Activated naive CD4-positive, alpha-beta T cell treated with anti-CD3 and anti-CD28 coated beads for 36 hours (primary cell): ENCODE measurements at regions of chr19 and their contacts with region 1.

Region 1: GRCh38 chr19:37594304-37594981 is at the starts of genes ZNF540 and ZNF571:
- DNase-seq: peak; percentile 96
- H3K4me3 Mint-ChIP-seq: peak within 1 kb of the TSS; percentile 99
- H3K27ac Mint-ChIP-seq: peak within 1 kb of the TSS; percentile 97
- H3K4me1 Mint-ChIP-seq: peaks cover 17% of the 10 kb centered on the region
- H3K27me3 Mint-ChIP-seq: no peaks in the 10 kb centered on the region
- total RNA-seq, gene ZNF540: 1.0 to 1.9 TPM
- total RNA-seq, gene ZNF571: 2.8 to 3.5 TPM

Region 2: DNA sequence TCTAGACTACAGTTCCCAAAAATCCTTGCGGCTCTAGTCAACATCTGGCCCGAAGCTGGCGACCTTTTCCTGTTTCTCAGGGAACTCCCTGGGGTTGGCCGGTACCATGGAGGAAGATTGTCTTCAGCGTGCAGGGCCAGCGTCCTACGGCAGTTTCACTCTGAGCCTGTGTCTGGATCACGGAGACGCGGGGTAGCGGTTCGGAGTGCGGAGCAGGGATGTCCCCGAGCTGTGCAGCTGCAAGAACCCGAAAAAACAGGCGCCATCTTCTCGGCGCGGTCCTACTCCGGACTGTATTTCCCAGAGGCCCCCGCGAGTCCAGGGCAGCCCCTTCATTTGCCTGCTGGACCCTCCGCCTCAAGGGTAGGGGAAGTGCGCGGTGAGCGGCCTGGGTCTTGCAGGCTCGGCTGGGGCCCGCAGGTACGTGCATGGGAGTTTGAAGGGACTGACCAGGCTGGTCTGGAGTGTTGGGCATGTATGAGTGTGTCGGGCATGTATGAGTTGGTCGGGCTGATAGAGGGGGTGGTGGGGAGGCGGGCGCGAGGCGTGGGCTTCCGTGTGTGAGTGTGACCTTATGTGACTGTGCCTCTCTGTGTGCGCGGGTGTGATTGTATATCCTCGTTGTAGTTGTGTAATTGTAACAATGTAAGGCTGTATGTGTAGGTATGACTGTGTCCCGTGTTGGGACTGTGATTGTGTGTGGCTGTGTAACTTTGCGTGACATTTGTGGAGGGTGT is 376.4 kb before region 1 on chr19 and contains the start of gene ZNF383:
- CTCF ChIA-PET with region 1: no interaction called
- intact Hi-C with region 1: loop called (anchors 1 kb)
- DNase-seq: peak; percentile 87
- H3K4me3 Mint-ChIP-seq: peak within 1 kb of the TSS; percentile 88
- H3K27ac Mint-ChIP-seq: peak within 1 kb of the TSS; percentile 92
- H3K4me1 Mint-ChIP-seq: peaks cover 16% of the 10 kb centered on the region
- H3K27me3 Mint-ChIP-seq: no peaks in the 10 kb centered on the region
- total RNA-seq, gene ZNF383: 8.4 to 9.1 TPM

Region 3: DNA sequence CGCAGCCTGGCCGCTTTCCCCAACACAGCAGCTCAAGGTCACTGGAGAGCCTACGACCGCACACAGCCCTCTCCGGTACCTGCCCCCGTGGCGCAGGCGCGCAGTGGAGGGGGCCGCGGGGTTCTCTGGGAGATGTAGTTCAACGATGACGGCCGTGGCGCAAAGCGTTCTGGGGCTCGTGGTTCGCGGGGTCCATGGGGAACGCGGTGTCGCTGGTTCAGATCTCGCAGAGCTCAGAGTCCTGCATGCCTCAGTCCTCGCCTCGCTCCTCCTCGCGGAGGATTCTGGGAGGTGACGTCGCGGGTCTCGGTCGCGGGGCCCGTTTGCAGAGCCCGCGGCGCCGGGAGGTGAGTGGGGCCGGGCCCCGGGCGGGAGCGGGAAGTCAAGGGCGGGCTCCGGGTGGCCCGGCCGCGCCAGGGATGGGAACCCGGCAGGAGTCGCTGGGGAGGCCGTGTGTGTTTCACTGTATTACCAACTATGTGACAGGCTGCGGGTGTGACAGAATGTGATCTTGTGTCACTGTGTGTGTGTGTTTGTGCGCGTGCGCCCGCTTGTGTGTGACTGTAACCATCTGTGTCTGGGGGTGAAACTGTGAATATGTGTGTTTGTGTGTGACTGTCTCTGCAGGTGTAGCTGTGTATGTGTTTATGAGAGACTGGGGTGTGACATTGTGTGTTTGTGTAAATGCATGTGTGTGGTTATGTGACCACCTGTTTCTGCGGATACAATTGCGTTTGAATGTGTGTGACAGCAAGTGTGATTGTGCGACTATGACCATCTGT is 223.4 kb before region 1 on chr19 and contains the start of gene ZNF527:
- CTCF ChIA-PET with region 1: no interaction called
- intact Hi-C with region 1: loop called (anchors 1 kb)
- DNase-seq: peak; percentile 97
- H3K4me3 Mint-ChIP-seq: peak within 1 kb of the TSS; percentile 83
- H3K27ac Mint-ChIP-seq: peak within 1 kb of the TSS; percentile 83
- H3K4me1 Mint-ChIP-seq: peaks cover 11% of the 10 kb centered on the region
- H3K27me3 Mint-ChIP-seq: no peaks in the 10 kb centered on the region
- total RNA-seq, gene ZNF527: 4.3 to 5.0 TPM

Region 4: GRCh38 chr19:37572203-37572602 is 22.2 kb before region 1 on chr19:
- CTCF ChIA-PET with region 1: no interaction called
- intact Hi-C with region 1: no loop called
- DNase-seq: no peak
- H3K4me3 Mint-ChIP-seq: no peak overlapping the region
- H3K27ac Mint-ChIP-seq: no peak overlapping the region
- H3K4me1 Mint-ChIP-seq: no peaks in the 10 kb centered on the region
- H3K27me3 Mint-ChIP-seq: no peaks in the 10 kb centered on the region

Region 5: GRCh38 chr19:37655689-37656371 is 61.4 kb after region 1 on chr19:
- CTCF ChIA-PET with region 1: no interaction called
- intact Hi-C with region 1: loop called (anchors 1 kb)
- DNase-seq: peak; percentile 87
- H3K4me3 Mint-ChIP-seq: peak overlapping the region; percentile 93
- H3K27ac Mint-ChIP-seq: peak overlapping the region; percentile 93
- H3K4me1 Mint-ChIP-seq: peaks cover 29% of the 10 kb centered on the region
- H3K27me3 Mint-ChIP-seq: no peaks in the 10 kb centered on the region

Region 6: GRCh38 chr19:37706052-37706605 is 111.7 kb after region 1 on chr19:
- CTCF ChIA-PET with region 1: no interaction called
- intact Hi-C with region 1: no loop called
- DNase-seq: no peak
- H3K4me3 Mint-ChIP-seq: no peak overlapping the region
- H3K27ac Mint-ChIP-seq: no peak overlapping the region
- H3K4me1 Mint-ChIP-seq: no peaks in the 10 kb centered on the region
- H3K27me3 Mint-ChIP-seq: no peaks in the 10 kb centered on the region

Region 7: GRCh38 chr19:38263689-38264485 is 669.4 kb after region 1 on chr19:
- CTCF ChIA-PET with region 1: no interaction called
- intact Hi-C with region 1: loop called (anchors 10 kb)
- DNase-seq: peak; percentile 86
- H3K4me3 Mint-ChIP-seq: peak overlapping the region; percentile 80
- H3K27ac Mint-ChIP-seq: peak overlapping the region; percentile 90
- H3K4me1 Mint-ChIP-seq: peaks cover 34% of the 10 kb centered on the region
- H3K27me3 Mint-ChIP-seq: peaks cover 3% of the 10 kb centered on the region